Upper lobe of right lung (tissue), 1 donor: ENCODE measurements at regions of chr20 and their contacts with region 1.

Region 1: DNA sequence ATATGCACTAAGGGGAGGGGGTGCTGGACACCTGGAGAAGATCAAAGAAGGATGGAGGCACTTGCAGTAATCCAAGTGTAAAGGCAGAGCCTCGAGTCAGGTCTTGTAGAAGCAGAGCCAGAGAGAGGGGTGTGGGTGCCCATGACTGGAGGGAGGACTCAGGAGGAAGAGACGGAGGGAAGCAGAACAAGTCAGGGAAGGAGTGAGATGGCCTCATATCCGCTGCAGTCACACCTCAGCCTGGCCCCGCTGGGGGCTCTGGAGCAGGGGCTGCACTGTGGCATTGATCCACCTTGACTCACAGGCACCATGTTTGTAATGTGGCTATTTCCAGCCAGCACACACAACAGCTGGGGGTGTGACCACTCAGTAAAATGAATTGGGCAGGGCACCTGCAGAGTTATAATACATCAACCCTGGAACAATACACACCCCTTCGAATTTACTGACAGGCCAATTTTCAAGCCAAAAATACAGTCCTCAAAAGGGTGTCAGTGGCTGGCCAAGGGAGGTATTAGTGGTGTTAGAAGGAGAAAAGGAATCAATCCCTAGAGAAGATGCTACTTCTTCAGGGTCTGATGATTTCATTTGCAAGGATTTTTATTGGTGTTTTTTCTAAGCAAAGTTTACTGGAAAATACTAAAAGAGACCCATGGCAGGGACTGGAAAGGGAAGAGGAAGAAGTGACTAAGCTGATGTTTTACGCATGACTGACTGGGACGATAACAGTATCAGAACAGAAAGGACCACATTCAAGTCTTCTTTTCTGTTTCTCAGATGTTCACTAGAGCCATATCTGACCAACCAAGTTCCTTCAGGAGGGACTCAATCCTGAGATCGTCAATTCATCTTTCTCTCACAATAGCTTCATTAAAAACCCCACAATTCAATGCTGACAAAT is 18.9 kb upstream of the NXT1 start:
- DNase-seq: no peak
- ATAC-seq: no peak
- H3K4me3 ChIP-seq: no peak overlapping the region
- H3K27ac ChIP-seq: no peak overlapping the region
- H3K4me1 ChIP-seq: no peaks in the 10 kb centered on the region
- H3K27me3 ChIP-seq: no peaks in the 10 kb centered on the region
- CTCF ChIP-seq: no peak

Region 2: DNA sequence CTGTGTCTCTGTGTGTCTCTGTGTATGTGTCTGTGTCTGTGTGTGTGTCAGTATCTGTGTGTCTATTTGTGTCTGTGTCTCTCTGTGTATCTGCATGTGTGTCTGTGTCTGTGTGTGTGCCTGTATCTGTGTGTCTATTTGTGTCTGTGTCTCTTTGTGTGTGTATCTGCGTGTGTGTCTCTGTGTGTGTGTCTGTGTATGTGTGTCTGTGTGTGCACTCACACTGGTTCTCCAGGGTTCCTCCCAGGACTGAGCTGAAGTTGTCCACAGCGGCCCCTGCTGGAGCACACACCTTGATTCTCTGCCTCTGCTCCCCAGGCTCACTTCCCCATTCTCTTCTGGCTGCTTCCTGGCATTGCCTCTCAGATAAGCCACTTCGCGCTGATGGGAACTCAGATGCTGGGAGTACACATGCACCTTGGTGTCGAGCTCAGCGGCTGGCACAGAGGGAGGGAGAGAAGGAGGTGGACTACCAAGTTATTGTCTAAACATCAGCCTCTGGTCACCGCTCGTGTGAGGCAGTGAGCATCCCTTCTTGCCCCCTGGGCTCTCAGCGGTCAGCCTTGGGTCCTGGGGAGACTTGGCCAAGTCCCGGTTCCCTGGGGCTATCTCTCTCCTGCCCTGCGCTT is 86.0 kb before region 1 on chr20:
- intact Hi-C with region 1: loop called (anchors 10 kb)
- DNase-seq: peak; percentile 81
- ATAC-seq: peak; percentile 92
- H3K4me3 ChIP-seq: no peak overlapping the region
- H3K27ac ChIP-seq: no peak overlapping the region
- H3K4me1 ChIP-seq: peaks cover 10% of the 10 kb centered on the region
- H3K27me3 ChIP-seq: no peaks in the 10 kb centered on the region
- CTCF ChIP-seq: peak; percentile 47

Region 3: GRCh38 chr20:23917024-23917725 is 585.5 kb after region 1 on chr20:
- intact Hi-C with region 1: no loop called
- DNase-seq: no peak
- ATAC-seq: no peak
- H3K4me3 ChIP-seq: no peak overlapping the region
- H3K27ac ChIP-seq: no peak overlapping the region
- H3K4me1 ChIP-seq: no peaks in the 10 kb centered on the region
- H3K27me3 ChIP-seq: no peaks in the 10 kb centered on the region
- CTCF ChIP-seq: no peak